ENCODE measurements at regions of chr11 and their contacts with region 1.

Region 1: GRCh38 chr11:9384535-9385303 is at the start of gene IPO7:
- DNase-seq: peak; percentile 73 to 92 (median 87)
- ATAC-seq: peak; percentile 98
- H3K4me3 ChIP-seq: peak within 1 kb of the TSS; percentile 79 to 83
- H3K4me3 Mint-ChIP-seq: peak within 1 kb of the TSS; percentile 96
- H3K27ac ChIP-seq: peak within 1 kb of the TSS; percentile 77 to 84
- H3K27ac Mint-ChIP-seq: peak within 1 kb of the TSS; percentile 92
- H3K4me1 ChIP-seq: peaks cover 12% of the 10 kb centered on the region
- H3K4me1 Mint-ChIP-seq: peaks cover 33% of the 10 kb centered on the region
- H3K27me3 ChIP-seq: no peaks in the 10 kb centered on the region
- H3K27me3 Mint-ChIP-seq: no peaks in the 10 kb centered on the region
- CTCF ChIP-seq: no peak
- total RNA-seq, gene IPO7: 52.4 to 53.4 TPM

Region 2: GRCh38 chr11:8911029-8911826 is 473.5 kb before region 1 on chr11 and contains the start of gene AKIP1:
- CTCF ChIA-PET with region 1: no interaction called
- POLR2A ChIA-PET with region 1: no interaction called
- intact Hi-C with region 1: loop called in 1 of 2 experiments (anchors 10 kb)
- DNase-seq: peak; percentile 37 to 93 (median 83)
- ATAC-seq: peak; percentile 77
- H3K4me3 ChIP-seq: peak within 1 kb of the TSS; percentile 76 to 94
- H3K4me3 Mint-ChIP-seq: peak within 1 kb of the TSS; percentile 91
- H3K27ac ChIP-seq: peak within 1 kb of the TSS; percentile 51 to 78
- H3K27ac Mint-ChIP-seq: peak within 1 kb of the TSS; percentile 90
- H3K4me1 ChIP-seq: peaks cover 23% of the 10 kb centered on the region
- H3K4me1 Mint-ChIP-seq: peaks cover 37% of the 10 kb centered on the region
- H3K27me3 ChIP-seq: no peaks in the 10 kb centered on the region
- H3K27me3 Mint-ChIP-seq: no peaks in the 10 kb centered on the region
- CTCF ChIP-seq: no peak
- total RNA-seq, gene AKIP1: 3.9 to 4.2 TPM

Region 3: GRCh38 chr11:9170450-9170849 is 214.3 kb before region 1 on chr11:
- CTCF ChIA-PET with region 1: interaction called, 3 read pairs
- POLR2A ChIA-PET with region 1: no interaction called
- intact Hi-C with region 1: loop called in 1 of 2 experiments (anchors 2 kb)
- DNase-seq: no peak
- ATAC-seq: no peak
- H3K4me3 ChIP-seq: no peak overlapping the region
- H3K4me3 Mint-ChIP-seq: no peak overlapping the region
- H3K27ac ChIP-seq: no peak overlapping the region
- H3K27ac Mint-ChIP-seq: no peak overlapping the region
- H3K4me1 ChIP-seq: no peaks in the 10 kb centered on the region
- H3K4me1 Mint-ChIP-seq: peaks cover 5% of the 10 kb centered on the region
- H3K27me3 ChIP-seq: no peaks in the 10 kb centered on the region
- H3K27me3 Mint-ChIP-seq: no peaks in the 10 kb centered on the region
- CTCF ChIP-seq: no peak

Region 4: GRCh38 chr11:9265211-9266131 is 119.2 kb before region 1 on chr11 and contains the start of gene DENND5A:
- CTCF ChIA-PET with region 1: no interaction called
- POLR2A ChIA-PET with region 1: no interaction called
- intact Hi-C with region 1: loop called (anchors 5 kb)
- DNase-seq: peak; percentile 12 to 74 (median 52)
- ATAC-seq: peak; percentile 44
- H3K4me3 ChIP-seq: peak within 1 kb of the TSS; percentile 71 to 79
- H3K4me3 Mint-ChIP-seq: peak within 1 kb of the TSS; percentile 98
- H3K27ac ChIP-seq: peak within 1 kb of the TSS; percentile 45 to 71
- H3K27ac Mint-ChIP-seq: peak within 1 kb of the TSS; percentile 97
- H3K4me1 ChIP-seq: peaks cover 23% of the 10 kb centered on the region
- H3K4me1 Mint-ChIP-seq: peaks cover 35% of the 10 kb centered on the region
- H3K27me3 ChIP-seq: no peaks in the 10 kb centered on the region
- H3K27me3 Mint-ChIP-seq: no peaks in the 10 kb centered on the region
- CTCF ChIP-seq: no peak
- total RNA-seq, gene DENND5A: 78.8 to 81.7 TPM

Region 5: DNA sequence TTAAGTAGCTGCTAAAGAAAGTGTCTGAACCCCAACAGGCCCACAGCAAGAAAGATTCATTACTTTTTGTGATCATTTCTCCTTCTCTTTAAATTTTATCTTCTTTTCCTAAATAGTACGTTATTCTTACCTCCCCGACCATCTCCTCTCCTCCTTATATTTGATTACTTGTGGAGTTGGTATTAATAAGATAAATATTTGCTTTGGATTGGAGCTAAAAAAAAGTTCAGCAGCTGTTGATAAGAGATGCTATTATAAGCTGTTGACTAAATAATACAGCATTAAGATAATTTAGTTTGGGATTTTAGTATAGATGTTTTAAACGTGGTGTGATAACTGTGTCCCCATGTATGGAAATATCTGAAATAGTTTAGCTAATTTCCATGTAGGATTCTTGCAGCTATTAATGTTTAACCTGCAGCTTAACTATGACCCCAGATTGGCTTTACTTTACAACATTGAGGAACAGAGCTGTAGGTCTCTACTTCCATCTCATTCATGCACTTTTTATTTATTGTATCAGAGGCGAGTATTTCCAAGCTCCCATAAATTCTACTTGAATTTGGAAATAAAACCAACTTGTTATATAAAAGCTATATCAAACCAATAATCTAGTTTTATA is 113.8 kb after region 1 on chr11:
- CTCF ChIA-PET with region 1: no interaction called
- POLR2A ChIA-PET with region 1: no interaction called
- intact Hi-C with region 1: no loop called
- DNase-seq: no peak
- ATAC-seq: no peak
- H3K4me3 ChIP-seq: no peak overlapping the region
- H3K4me3 Mint-ChIP-seq: no peak overlapping the region
- H3K27ac ChIP-seq: no peak overlapping the region
- H3K27ac Mint-ChIP-seq: no peak overlapping the region
- H3K4me1 ChIP-seq: no peaks in the 10 kb centered on the region
- H3K4me1 Mint-ChIP-seq: no peaks in the 10 kb centered on the region
- H3K27me3 ChIP-seq: no peaks in the 10 kb centered on the region
- H3K27me3 Mint-ChIP-seq: no peaks in the 10 kb centered on the region
- CTCF ChIP-seq: no peak